ENCODE measurements at regions of chr2 and their contacts with region 1.

Region 1: DNA sequence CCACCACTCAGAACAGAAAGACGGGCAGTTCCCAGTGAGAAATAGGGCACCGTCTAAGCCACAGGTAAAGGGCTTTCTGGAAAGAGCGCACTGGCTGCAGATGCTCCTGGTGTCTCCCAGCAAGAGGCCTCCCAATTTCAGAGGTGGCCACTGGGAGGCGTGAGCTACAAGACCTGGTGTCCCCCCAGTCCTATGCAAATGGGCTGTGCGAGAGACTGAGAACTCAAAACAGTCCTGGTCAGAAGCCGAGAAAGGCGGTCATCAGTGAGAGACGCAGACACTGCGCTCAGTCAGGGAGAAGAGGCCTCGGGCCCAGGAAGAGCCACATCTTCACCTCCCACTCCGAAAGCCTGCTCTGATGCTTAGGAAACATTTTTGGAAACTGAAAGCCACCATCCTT is 179.5 kb downstream of the EIPR1 start:
- DNase-seq: peak in 1 of 2 experiments; percentile 61
- H3K4me3 ChIP-seq: no peak overlapping the region
- H3K27ac ChIP-seq: peak overlapping the region; percentile 68; the same call in 1 of the 2 replicates
- H3K4me1 ChIP-seq: peaks cover 4 to 16% (median 7%) of the 10 kb centered on the region in 4 experiments
- H3K27me3 ChIP-seq: no peaks in the 10 kb centered on the region; a peak in 2 of 7 replicates
- CTCF ChIP-seq: peak; percentile 53 to 83 (median 67)
- EP300 ChIP-seq: no peak
- POLR2A ChIP-seq: peak in 1 of 2 experiments; percentile 66; a peak in 2 of 3 replicates
- RAD21 ChIP-seq: peak; percentile 69 to 73

Region 2: GRCh38 chr2:3114406-3115185 is 83.5 kb before region 1 on chr2:
- CTCF ChIA-PET with region 1: no interaction called
- POLR2A ChIA-PET with region 1: no interaction called
- DNase-seq: peak in 1 of 2 experiments; percentile 27
- H3K4me3 ChIP-seq: no peak overlapping the region
- H3K27ac ChIP-seq: no peak overlapping the region
- H3K4me1 ChIP-seq: peaks cover 0 to 3% (median 1%) of the 10 kb centered on the region in 4 experiments; a peak in 2 of 7 replicates
- H3K27me3 ChIP-seq: no peaks in the 10 kb centered on the region
- CTCF ChIP-seq: no peak
- EP300 ChIP-seq: no peak
- POLR2A ChIP-seq: no peak
- RAD21 ChIP-seq: no peak

Region 3: DNA sequence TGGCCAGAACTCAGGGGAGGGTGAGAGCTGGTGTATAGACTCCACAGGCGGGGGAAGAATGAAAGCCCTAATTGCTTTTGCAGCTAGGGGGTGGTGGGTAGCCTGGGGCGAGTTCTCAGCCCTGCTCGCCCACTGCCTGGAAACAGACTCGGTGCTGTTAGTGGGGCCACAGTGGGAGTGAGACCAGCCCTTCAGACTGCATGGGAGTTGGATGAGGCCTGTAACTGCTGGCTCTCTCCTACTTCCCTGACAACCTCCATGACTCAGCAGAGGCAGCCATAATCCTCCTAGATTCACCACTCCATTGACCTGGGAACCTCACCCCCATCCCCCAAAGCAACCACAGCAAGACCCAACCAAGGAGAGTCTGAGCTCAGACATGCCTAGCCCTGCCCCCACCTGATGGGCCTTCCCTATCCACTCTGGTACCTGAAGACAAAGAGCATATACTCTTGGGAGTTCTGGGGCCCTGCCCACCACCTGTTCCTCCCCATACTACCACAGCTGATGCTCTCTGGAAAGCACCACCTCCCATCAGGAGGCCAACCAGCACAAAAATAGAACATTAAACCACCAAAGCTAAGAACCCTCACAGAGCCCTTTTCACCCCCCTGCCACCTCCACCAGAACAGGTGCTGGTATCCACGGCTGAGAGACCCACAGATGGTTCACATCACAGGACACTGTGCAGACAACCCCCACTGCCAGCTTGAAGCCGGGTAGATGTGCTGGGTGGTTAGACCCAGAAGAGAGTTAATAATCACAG is 46.8 kb before region 1 on chr2:
- CTCF ChIA-PET with region 1: no interaction called
- POLR2A ChIA-PET with region 1: no interaction called
- DNase-seq: no peak
- H3K4me3 ChIP-seq: no peak overlapping the region
- H3K27ac ChIP-seq: no peak overlapping the region
- H3K4me1 ChIP-seq: no peaks in the 10 kb centered on the region
- H3K27me3 ChIP-seq: no peaks in the 10 kb centered on the region
- CTCF ChIP-seq: no peak
- EP300 ChIP-seq: no peak
- POLR2A ChIP-seq: no peak
- RAD21 ChIP-seq: no peak

Region 4: GRCh38 chr2:3309496-3310355 is 111.6 kb after region 1 on chr2:
- CTCF ChIA-PET with region 1: interaction called, 10 read pairs
- POLR2A ChIA-PET with region 1: no interaction called
- DNase-seq: no peak
- H3K4me3 ChIP-seq: no peak overlapping the region
- H3K27ac ChIP-seq: no peak overlapping the region
- H3K4me1 ChIP-seq: peaks cover 0 to 3% (median 0%) of the 10 kb centered on the region in 4 experiments; a peak in 2 of 7 replicates
- H3K27me3 ChIP-seq: no peaks in the 10 kb centered on the region
- CTCF ChIP-seq: no peak
- EP300 ChIP-seq: no peak
- POLR2A ChIP-seq: no peak
- RAD21 ChIP-seq: no peak

Measured in H1 (cell line).